Calu3 (cell line): ENCODE measurements at regions of chr3 and their contacts with region 1.

Region 1: GRCh38 chr3:131619821-131620220 is 117.0 kb upstream of the MRPL3 start:
- DNase-seq: no peak
- H3K4me3 Mint-ChIP-seq: no peak overlapping the region
- H3K27ac Mint-ChIP-seq: no peak overlapping the region
- H3K4me1 Mint-ChIP-seq: no peaks in the 10 kb centered on the region
- H3K27me3 Mint-ChIP-seq: no peaks in the 10 kb centered on the region
- CTCF ChIP-seq: no peak

Region 2: GRCh38 chr3:131474115-131474514 is 145.7 kb before region 1 on chr3:
- CTCF ChIA-PET with region 1: no interaction called
- intact Hi-C with region 1: no loop called
- DNase-seq: no peak
- H3K4me3 Mint-ChIP-seq: no peak overlapping the region
- H3K27ac Mint-ChIP-seq: no peak overlapping the region
- H3K4me1 Mint-ChIP-seq: no peaks in the 10 kb centered on the region
- H3K27me3 Mint-ChIP-seq: no peaks in the 10 kb centered on the region
- CTCF ChIP-seq: no peak

Region 3: DNA sequence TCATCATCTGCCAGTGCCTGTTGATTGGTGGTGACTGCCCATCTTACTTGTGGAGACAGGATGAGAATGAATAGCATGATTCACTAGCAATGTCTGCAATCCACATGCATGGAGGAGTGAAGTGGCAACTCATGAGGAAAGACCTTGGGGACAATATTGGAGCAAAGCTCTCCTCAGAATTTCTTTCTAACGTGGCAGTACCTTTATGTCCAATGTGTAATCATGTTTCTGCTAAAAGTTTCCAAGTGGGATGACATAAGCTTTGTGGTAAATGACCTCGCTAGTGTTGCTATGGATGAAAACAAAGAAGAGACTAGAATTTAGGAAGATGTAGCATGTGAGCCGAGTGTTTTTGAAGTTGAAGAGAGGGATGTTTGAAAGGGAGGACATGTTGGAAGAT is 297.2 kb after region 1 on chr3:
- CTCF ChIA-PET with region 1: no interaction called
- intact Hi-C with region 1: no loop called
- DNase-seq: no peak
- H3K4me3 Mint-ChIP-seq: no peak overlapping the region
- H3K27ac Mint-ChIP-seq: no peak overlapping the region
- H3K4me1 Mint-ChIP-seq: no peaks in the 10 kb centered on the region
- H3K27me3 Mint-ChIP-seq: no peaks in the 10 kb centered on the region
- CTCF ChIP-seq: no peak

Region 4: GRCh38 chr3:132325103-132325606 is 705.3 kb after region 1 on chr3:
- CTCF ChIA-PET with region 1: interaction called, 10 read pairs
- intact Hi-C with region 1: no loop called
- DNase-seq: no peak
- H3K4me3 Mint-ChIP-seq: no peak overlapping the region
- H3K27ac Mint-ChIP-seq: peak overlapping the region; percentile 21
- H3K4me1 Mint-ChIP-seq: peaks cover 21% of the 10 kb centered on the region
- H3K27me3 Mint-ChIP-seq: no peaks in the 10 kb centered on the region
- CTCF ChIP-seq: no peak